ENCODE measurements at regions of chr7 and their contacts with region 1.

Region 1: GRCh38 chr7:143240291-143241168 is 18.7 kb downstream of the TAS2R40 start:
- DNase-seq: peak; percentile 63
- H3K4me3 Mint-ChIP-seq: no peak overlapping the region
- H3K27ac Mint-ChIP-seq: peak overlapping the region; percentile 87
- H3K4me1 Mint-ChIP-seq: peaks cover 49% of the 10 kb centered on the region
- H3K27me3 Mint-ChIP-seq: peaks cover 11% of the 10 kb centered on the region

Region 2: GRCh38 chr7:143147072-143147694 is 93.3 kb before region 1 on chr7:
- intact Hi-C with region 1: no loop called
- DNase-seq: no peak
- H3K4me3 Mint-ChIP-seq: no peak overlapping the region
- H3K27ac Mint-ChIP-seq: no peak overlapping the region
- H3K4me1 Mint-ChIP-seq: no peaks in the 10 kb centered on the region
- H3K27me3 Mint-ChIP-seq: no peaks in the 10 kb centered on the region

Region 3: DNA sequence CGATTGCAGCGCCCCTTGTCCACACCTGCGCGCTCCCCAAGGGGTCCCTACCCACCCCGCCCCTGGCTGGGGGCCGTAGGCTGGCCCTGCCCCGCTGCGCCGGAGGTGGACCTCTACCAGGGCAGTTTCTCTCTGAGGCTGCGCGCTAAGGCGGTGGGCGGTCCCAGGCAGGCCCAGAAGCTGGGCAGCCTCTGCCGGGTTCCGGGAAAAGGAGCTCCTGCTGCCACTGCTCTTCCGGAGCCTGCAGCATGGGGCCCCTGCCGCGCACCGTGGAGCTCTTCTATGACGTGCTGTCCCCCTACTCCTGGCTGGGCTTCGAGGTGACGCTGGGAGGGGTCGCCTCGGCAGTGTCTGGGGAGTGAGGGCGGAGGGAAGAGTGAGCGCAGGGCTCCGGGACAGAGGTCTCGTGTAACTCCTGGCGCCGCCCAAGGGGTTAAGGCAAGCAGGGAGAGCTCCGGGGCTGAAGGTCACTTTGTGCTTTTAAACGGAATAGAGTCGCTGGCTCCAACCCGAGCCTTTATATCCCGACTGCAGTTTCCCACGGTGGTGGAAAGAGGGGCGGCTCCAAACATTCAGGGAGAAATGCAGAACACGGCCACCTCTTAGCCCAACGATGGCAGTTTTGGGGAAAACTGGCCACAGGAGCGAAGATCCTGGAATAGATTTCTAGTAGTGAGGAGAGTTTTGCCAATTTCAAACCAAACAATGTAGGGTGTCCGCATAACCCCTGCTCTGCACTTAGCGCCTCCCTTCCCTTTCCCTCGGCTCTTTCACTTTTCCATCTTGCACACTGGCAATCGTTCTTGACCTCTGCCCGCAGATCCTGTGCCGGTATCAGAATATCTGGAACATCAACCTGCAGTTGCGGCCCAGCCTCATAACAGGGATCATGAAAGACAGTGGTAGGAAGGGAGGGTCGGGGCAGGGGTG is 23.0 kb after region 1 on chr7 and contains the start of gene GSTK1:
- intact Hi-C with region 1: loop called (anchors 1 kb)
- DNase-seq: peak; percentile 76
- H3K4me3 Mint-ChIP-seq: peak within 1 kb of the TSS; percentile 97
- H3K27ac Mint-ChIP-seq: peak within 1 kb of the TSS; percentile 94
- H3K4me1 Mint-ChIP-seq: peaks cover 49% of the 10 kb centered on the region
- H3K27me3 Mint-ChIP-seq: no peaks in the 10 kb centered on the region
- total RNA-seq, gene GSTK1: 166 and 168 TPM in 2 replicates

Region 4: GRCh38 chr7:143299840-143300239 is 59.3 kb after region 1 on chr7:
- intact Hi-C with region 1: loop called (anchors 1 kb)
- DNase-seq: peak; percentile 35
- H3K4me3 Mint-ChIP-seq: no peak overlapping the region
- H3K27ac Mint-ChIP-seq: no peak overlapping the region
- H3K4me1 Mint-ChIP-seq: peaks cover 58% of the 10 kb centered on the region
- H3K27me3 Mint-ChIP-seq: no peaks in the 10 kb centered on the region

Region 5: DNA sequence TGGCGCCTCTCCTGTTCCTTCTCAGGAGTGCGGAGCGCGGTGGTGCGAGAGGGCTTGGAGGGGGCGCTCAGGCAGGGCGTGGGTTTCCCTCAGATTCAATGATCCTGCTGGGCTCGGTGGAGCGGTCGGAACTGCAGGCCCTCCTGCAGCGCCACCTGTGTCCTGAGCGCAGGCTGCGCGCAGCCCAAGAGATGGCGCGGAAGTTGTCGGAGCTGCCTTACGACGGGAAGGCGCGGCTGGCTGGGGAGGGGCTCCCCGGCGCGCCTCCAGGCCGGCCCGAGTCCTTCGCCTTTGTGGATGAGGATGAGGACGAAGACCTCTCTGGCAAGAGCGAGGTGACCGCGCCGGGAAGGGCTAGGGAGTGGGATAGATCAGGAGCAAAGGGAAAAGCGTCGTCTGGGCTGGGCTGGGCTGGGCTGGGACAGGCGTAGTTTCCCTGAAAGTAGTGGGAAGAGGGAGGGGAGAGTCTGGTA is 104.9 kb after region 1 on chr7:
- intact Hi-C with region 1: loop called (anchors 2 kb)
- DNase-seq: peak; percentile 55
- H3K4me3 Mint-ChIP-seq: peak overlapping the region; percentile 54
- H3K27ac Mint-ChIP-seq: no peak overlapping the region
- H3K4me1 Mint-ChIP-seq: peaks cover 11% of the 10 kb centered on the region
- H3K27me3 Mint-ChIP-seq: peaks cover 44% of the 10 kb centered on the region

Region 6: GRCh38 chr7:143408686-143409561 is 168.4 kb after region 1 on chr7 and contains the start of gene EPHA1:
- intact Hi-C with region 1: loop called (anchors 2 kb)
- DNase-seq: no peak
- H3K4me3 Mint-ChIP-seq: peak within 1 kb of the TSS; percentile 45
- H3K27ac Mint-ChIP-seq: no peak within 1 kb of the TSS
- H3K4me1 Mint-ChIP-seq: peaks cover 23% of the 10 kb centered on the region
- H3K27me3 Mint-ChIP-seq: peaks cover 32% of the 10 kb centered on the region
- total RNA-seq, gene EPHA1: 0.07 and 0.34 TPM in 2 replicates